ENCODE measurements at regions of chr17 and their contacts with region 1.

Region 1: GRCh38 chr17:58358408-58359172 is 6.6 kb upstream of the SUPT4H1 start:
- DNase-seq: no peak
- H3K4me3 ChIP-seq: no peak overlapping the region
- H3K27ac ChIP-seq: no peak overlapping the region
- H3K4me1 ChIP-seq: peaks cover 3 to 6% of the 10 kb centered on the region in 2 donors
- H3K27me3 ChIP-seq: no peaks in the 10 kb centered on the region
- CTCF ChIP-seq: no peak
- POLR2A ChIP-seq: no peak

Region 2: GRCh38 chr17:58329035-58329809 is 29.4 kb before region 1 on chr17:
- intact Hi-C with region 1: loop called in 1 of 2 experiments (anchors 5 kb)
- DNase-seq: peak in 3 of 7 donors; percentile 44 to 62 (median 51)
- H3K4me3 ChIP-seq: no peak overlapping the region
- H3K27ac ChIP-seq: no peak overlapping the region
- H3K4me1 ChIP-seq: peaks cover 7% of the 10 kb centered on the region in 2 donors
- H3K27me3 ChIP-seq: no peaks in the 10 kb centered on the region
- CTCF ChIP-seq: peak in 1 of 6 experiments; percentile 19
- POLR2A ChIP-seq: no peak

Region 3: DNA sequence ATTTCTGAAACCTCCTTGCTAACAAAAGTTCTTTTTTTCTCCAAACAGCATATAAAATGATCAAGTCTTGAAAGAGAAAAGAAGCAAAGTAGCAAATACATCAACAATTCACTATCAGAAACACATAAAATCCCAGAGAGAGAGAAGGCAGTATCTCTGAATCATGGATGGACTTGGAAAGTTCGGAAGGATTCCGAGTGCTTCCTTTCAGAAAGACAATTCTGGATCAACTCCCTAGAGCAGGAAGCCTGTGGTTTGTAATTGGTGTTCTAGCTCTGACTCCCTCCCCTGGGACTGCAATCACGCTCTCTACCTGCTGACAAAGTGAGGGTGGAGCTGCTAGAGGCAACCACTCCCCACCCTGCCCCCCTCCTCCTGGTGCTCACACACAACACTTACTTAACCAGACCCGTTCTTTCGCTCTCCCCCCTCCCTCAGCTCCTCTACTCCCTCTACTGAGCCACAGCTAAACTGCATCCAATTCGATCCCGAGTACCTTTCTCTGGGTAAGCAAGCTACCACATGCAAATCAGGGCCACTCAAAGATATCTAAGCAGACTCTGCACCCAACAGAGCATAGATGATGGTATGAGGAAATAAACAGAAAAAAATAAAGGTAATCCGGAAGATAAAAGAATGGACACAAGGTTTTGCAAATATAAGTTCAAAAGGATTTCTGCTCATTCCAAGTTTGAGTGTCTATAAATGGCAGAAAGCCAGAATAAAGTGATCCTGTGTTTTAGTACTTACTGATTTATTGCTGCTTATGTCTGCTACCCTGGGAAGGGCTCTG is 58.9 kb after region 1 on chr17 and contains the start of gene RNF43:
- intact Hi-C with region 1: loop called in 1 of 2 experiments (anchors 5 kb)
- DNase-seq: peak; percentile 96 to 99 (median 99)
- H3K4me3 ChIP-seq: peak within 1 kb of the TSS in 2 of 4 donors; percentile 22 to 56
- H3K27ac ChIP-seq: peak within 1 kb of the TSS in 4 of 5 donors; percentile 76 to 88 (median 83)
- H3K4me1 ChIP-seq: peaks cover 9 to 10% of the 10 kb centered on the region in 2 donors
- H3K27me3 ChIP-seq: no peaks in the 10 kb centered on the region
- CTCF ChIP-seq: peak; percentile 57 to 98 (median 90)
- POLR2A ChIP-seq: peak; percentile 73 to 99
- total RNA-seq, gene RNF43: 10.5 to 30.8 (median 17.8) TPM